ENCODE measurements at regions of chr2 and their contacts with region 1.

Region 1: DNA sequence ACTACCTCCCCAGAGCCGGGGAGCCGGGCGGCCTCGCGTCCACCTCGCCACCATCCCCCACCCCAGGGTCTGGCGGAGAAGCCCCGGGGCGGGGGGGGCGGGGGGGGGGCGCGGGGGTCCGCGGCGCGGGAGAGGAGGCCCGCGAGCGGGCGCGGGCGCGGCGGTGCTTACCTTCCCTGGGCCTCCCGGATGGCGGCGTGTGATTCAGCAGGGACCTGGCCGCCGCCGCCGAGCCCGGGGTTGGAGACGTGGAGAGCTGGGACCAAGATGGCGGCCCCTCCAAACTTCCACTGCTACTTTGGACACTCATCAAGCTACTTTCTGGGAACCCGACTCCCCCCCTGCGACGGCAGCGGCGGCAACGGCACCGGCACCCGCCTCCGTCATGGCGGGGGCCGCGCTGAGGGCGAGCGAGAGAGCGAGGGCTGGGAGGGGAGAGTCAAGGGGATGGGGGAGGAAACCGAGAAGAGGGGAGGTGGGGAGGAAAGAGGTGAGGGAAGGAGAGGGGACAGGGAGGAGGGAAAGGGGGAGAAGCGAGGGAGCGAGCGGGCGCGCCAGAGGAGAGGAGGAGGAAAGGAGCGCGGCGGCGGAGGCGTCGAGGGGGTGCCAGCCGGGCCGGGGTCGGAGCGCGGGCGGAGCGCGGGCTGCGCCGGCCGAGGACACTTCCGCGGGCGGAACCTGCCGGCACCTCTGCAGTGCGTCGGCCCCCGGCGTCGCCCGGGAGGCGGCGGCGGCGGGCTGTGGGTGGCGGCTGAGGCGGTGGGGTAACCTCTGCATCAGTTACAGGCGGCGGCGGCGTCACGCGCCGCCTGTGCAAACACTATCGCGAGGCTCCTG is at the start of gene TLK1:
- DNase-seq: peak; percentile 93
- H3K4me3 Mint-ChIP-seq: peak within 1 kb of the TSS; percentile 92
- H3K27ac Mint-ChIP-seq: peak within 1 kb of the TSS; percentile 98
- H3K4me1 Mint-ChIP-seq: peaks cover 49% of the 10 kb centered on the region
- H3K27me3 Mint-ChIP-seq: no peaks in the 10 kb centered on the region
- total RNA-seq, gene TLK1: 91.8 and 94.9 TPM in 2 replicates

Region 2: GRCh38 chr2:170928824-170929685 is 231.3 kb before region 1 on chr2 and contains the start of gene GORASP2:
- intact Hi-C with region 1: loop called (anchors 1 kb)
- DNase-seq: peak; percentile 99
- H3K4me3 Mint-ChIP-seq: peak within 1 kb of the TSS; percentile 92
- H3K27ac Mint-ChIP-seq: peak within 1 kb of the TSS; percentile 97
- H3K4me1 Mint-ChIP-seq: peaks cover 32% of the 10 kb centered on the region
- H3K27me3 Mint-ChIP-seq: no peaks in the 10 kb centered on the region
- total RNA-seq, gene GORASP2: 93.0 and 96.7 TPM in 2 replicates

Region 3: DNA sequence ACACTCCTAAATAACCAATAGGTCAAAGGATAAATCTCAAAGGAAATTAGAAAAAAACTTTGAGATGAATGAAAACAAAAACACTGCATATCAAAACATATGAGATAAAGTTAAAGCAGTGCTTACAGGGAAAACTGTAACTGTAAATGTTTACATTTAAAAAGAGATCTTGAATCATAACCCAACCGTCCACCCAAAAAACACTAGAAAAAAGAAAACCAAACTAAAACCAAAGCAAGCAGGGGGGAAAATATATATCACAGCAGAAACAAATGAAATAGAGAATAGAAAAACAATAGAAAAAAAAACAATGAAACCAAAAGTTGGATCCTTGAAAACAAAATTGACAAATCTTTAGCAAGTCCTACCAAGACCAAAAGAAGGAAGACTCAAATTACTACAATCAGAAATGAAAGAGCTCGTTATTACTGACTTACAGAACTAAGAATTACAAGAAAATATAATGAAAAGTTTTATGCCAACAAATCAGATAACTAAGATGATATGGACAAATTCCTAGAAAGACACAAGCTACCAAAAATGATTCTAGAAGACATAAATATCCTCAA is 65.2 kb before region 1 on chr2:
- intact Hi-C with region 1: loop called (anchors 2 kb)
- DNase-seq: no peak
- H3K4me3 Mint-ChIP-seq: peak overlapping the region; percentile 7
- H3K27ac Mint-ChIP-seq: peak overlapping the region; percentile 72
- H3K4me1 Mint-ChIP-seq: peaks cover 26% of the 10 kb centered on the region
- H3K27me3 Mint-ChIP-seq: no peaks in the 10 kb centered on the region

Region 4: DNA sequence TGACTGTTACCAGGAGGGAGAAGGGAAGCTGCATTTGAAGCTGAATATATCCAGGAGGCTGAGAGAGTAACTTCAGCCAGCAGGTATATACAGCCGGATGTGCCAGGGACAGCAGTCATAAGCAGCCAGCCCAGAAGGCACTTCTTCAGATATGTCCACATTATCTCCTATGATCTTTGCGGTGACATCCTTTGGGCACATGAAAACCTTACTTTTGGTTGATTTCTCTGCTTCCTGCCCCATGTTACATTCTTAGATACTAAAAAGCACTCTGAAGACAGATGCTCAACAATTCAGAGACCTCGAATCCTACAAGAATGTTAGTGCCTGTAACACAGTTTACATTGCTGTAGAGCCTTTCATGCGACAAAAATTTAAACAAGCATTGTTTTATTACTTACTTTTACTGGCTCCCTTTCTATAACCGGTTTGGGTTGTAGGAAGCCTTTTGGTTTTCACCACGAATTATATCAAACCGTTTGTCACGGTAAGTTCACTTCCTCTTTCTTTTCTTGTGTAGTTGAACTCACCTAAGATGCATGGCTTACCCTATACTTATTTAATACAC is 50.6 kb after region 1 on chr2:
- intact Hi-C with region 1: loop called (anchors 5 kb)
- DNase-seq: peak; percentile 83
- H3K4me3 Mint-ChIP-seq: peak overlapping the region; percentile 67
- H3K27ac Mint-ChIP-seq: peak overlapping the region; percentile 68
- H3K4me1 Mint-ChIP-seq: peaks cover 27% of the 10 kb centered on the region
- H3K27me3 Mint-ChIP-seq: peaks cover 3% of the 10 kb centered on the region

Region 5: GRCh38 chr2:171416009-171416926 is 255.9 kb after region 1 on chr2:
- intact Hi-C with region 1: loop called (anchors 1 kb)
- DNase-seq: peak; percentile 93
- H3K4me3 Mint-ChIP-seq: no peak overlapping the region
- H3K27ac Mint-ChIP-seq: peak overlapping the region; percentile 80
- H3K4me1 Mint-ChIP-seq: peaks cover 23% of the 10 kb centered on the region
- H3K27me3 Mint-ChIP-seq: no peaks in the 10 kb centered on the region

Measured in activated CD4-positive, alpha-beta T cell treated with anti-CD3 and anti-CD28 coated beads, Interleukin-2, amount 10 ng/mL, durations not matched to agents 24 days and 14 days (primary cell).